OCI-LY7 (cell line): ENCODE measurements at regions of chr16 and their contacts with region 1.

Region 1: GRCh38 chr16:11677451-11677951 is 9.2 kb downstream of the SNN start:
- DNase-seq: peak; percentile 66
- H3K4me3 ChIP-seq: peak overlapping the region; percentile 42
- H3K27ac ChIP-seq: peak overlapping the region; percentile 98
- H3K4me1 ChIP-seq: peaks cover 99% of the 10 kb centered on the region
- CTCF ChIP-seq: no peak

Region 2: GRCh38 chr16:11396241-11397048 is 281.1 kb before region 1 on chr16:
- CTCF ChIA-PET with region 1: no interaction called
- POLR2A ChIA-PET with region 1: no interaction called
- intact Hi-C with region 1: loop called (anchors 1 kb)
- DNase-seq: peak; percentile 66
- H3K4me3 ChIP-seq: no peak overlapping the region
- H3K27ac ChIP-seq: no peak overlapping the region
- H3K4me1 ChIP-seq: no peaks in the 10 kb centered on the region
- CTCF ChIP-seq: peak; percentile 98